ENCODE measurements at regions of chr16 and their contacts with region 1.

Region 1: GRCh38 chr16:72400257-72400882 is 228.4 kb upstream of the PMFBP1 start:
- DNase-seq: peak; percentile 59
- H3K4me3 Mint-ChIP-seq: no peak overlapping the region
- H3K27ac Mint-ChIP-seq: peak overlapping the region; percentile 0
- H3K4me1 Mint-ChIP-seq: no peaks in the 10 kb centered on the region
- H3K27me3 Mint-ChIP-seq: no peaks in the 10 kb centered on the region
- CTCF ChIP-seq: peak; percentile 79

Region 2: DNA sequence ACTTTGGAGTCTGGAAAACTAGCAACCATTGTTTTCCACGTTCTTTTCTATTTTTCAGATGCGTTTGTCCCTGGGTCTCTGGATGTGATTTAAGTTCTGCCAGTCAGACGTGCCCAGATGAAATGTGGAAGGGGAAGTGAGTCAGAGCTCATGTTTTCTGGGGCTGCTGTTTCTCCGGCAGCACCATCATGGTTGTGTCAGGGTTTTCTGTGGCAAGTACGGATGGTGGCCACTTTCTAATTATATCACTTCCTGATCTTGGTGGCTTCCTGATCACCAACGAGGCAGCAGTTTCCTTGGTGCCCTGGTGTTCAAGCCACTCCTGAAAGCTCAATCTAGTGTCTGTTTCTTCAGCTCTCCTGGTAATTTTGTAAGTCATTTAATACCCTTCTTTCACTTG is 197.0 kb before region 1 on chr16:
- CTCF ChIA-PET with region 1: no interaction called
- POLR2A ChIA-PET with region 1: no interaction called
- intact Hi-C with region 1: no loop called
- DNase-seq: peak; percentile 55
- H3K4me3 Mint-ChIP-seq: no peak overlapping the region
- H3K27ac Mint-ChIP-seq: no peak overlapping the region
- H3K4me1 Mint-ChIP-seq: peaks cover 17% of the 10 kb centered on the region
- H3K27me3 Mint-ChIP-seq: no peaks in the 10 kb centered on the region
- CTCF ChIP-seq: no peak

Region 3: DNA sequence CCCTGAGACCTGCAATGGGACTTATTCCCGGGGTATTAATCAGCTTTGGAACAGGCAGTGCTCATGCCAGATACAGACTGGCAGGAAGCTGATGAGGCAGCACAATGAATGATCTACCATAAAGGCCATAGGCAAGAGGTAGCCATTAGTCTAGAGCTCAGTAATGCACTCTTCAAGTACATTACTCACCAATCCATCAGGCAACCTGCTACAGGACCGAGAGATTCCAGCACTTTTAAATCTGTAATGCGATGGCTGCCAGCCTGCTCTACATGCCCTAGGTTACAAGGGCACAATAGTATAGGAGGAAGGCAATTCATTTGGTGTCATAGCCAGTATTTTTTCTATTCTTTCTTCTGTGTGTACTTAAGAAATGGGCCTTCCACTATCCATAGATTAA is 10.6 kb before region 1 on chr16:
- CTCF ChIA-PET with region 1: interaction called, 16 read pairs
- POLR2A ChIA-PET with region 1: no interaction called
- intact Hi-C with region 1: no loop called
- DNase-seq: no peak
- H3K4me3 Mint-ChIP-seq: no peak overlapping the region
- H3K27ac Mint-ChIP-seq: no peak overlapping the region
- H3K4me1 Mint-ChIP-seq: no peaks in the 10 kb centered on the region
- H3K27me3 Mint-ChIP-seq: no peaks in the 10 kb centered on the region
- CTCF ChIP-seq: no peak